ENCODE measurements at regions of chr9 and their contacts with region 1.

Region 1: DNA sequence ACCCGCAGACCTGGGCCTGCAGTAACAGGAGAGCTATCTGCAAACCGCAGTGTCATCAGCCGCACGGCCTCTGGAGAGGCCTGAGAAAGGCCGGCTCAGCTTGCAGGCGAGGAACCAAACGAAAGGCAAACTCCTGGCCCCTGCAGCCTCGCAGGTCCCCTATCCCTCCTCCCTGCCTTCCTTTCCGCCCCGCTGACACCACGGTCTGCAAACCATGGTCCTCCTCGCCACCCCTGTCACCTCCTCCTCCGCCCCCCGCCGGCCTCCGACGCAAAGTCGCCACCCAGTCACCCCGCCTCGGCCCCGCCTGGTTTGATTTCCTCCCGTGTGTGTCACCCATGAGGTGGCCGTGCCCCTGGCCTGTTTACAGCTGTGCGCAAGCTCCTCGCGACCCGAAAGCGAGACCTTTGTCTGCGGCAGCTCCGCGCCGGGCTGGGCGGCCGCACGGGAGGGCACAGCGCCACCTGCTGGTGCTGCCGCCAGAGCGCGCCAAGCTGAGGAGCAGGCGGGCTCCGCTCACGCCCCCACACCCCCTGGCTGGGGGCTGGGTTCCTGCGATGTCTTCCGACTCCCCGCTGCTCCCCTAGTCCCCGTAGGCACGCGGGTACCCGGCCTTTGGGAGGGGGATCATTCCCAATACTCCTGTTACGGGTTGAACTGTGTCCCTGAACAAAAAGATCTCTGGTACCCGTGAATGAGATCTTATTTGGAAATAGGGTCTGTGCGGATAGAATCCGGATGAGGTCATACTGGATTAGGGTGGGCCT is 19.4 kb downstream of the GBGT1 start:
- DNase-seq: peak; percentile 97
- ATAC-seq: peak; percentile 75
- H3K4me3 Mint-ChIP-seq: peak overlapping the region; percentile 51
- H3K27ac Mint-ChIP-seq: peak overlapping the region; percentile 76
- H3K4me1 Mint-ChIP-seq: peaks cover 63% of the 10 kb centered on the region
- H3K27me3 Mint-ChIP-seq: no peaks in the 10 kb centered on the region
- CTCF ChIP-seq: peak; percentile 98

Region 2: DNA sequence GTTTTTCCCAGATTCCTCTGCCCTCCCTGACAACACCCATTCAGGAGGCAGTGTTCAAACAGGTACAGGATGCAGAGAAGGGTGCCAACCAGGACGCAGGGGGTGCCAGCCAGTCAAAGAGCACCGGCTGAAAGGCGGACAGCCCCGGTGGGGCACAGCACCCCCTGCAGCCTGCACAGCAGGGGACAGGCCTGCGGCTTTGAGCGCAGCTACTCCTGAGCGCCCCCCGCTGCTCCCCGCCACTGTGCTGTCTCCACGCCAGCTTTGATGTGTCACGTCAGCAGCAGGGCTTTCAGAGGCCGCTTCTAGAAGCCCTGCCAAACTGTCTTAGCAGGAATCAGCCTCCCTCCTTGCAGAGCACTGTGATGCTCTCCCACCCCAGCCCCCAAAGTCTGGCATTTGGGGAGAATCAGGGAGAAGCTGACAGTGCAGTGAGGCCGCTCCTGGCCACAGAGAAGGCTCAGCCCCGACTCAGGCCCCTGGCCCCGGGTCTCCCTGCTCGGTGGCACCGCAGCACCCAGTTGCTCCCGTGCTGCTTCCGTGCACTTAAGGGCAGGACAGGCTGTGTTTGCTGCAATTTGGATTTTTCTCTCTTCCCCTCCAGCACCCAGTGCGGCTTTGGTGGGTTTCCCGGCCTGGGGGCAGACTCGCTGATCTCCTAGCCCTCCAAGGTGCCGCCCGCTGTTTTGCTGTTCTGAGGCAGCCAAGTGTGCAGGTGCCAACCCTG is 286.5 kb before region 1 on chr9:
- CTCF ChIA-PET with region 1: no interaction called
- POLR2A ChIA-PET with region 1: no interaction called
- intact Hi-C with region 1: no loop called
- DNase-seq: no peak
- ATAC-seq: no peak
- H3K4me3 Mint-ChIP-seq: no peak overlapping the region
- H3K27ac Mint-ChIP-seq: no peak overlapping the region
- H3K4me1 Mint-ChIP-seq: peaks cover 12% of the 10 kb centered on the region
- H3K27me3 Mint-ChIP-seq: peaks cover 2% of the 10 kb centered on the region
- CTCF ChIP-seq: no peak

Region 3: DNA sequence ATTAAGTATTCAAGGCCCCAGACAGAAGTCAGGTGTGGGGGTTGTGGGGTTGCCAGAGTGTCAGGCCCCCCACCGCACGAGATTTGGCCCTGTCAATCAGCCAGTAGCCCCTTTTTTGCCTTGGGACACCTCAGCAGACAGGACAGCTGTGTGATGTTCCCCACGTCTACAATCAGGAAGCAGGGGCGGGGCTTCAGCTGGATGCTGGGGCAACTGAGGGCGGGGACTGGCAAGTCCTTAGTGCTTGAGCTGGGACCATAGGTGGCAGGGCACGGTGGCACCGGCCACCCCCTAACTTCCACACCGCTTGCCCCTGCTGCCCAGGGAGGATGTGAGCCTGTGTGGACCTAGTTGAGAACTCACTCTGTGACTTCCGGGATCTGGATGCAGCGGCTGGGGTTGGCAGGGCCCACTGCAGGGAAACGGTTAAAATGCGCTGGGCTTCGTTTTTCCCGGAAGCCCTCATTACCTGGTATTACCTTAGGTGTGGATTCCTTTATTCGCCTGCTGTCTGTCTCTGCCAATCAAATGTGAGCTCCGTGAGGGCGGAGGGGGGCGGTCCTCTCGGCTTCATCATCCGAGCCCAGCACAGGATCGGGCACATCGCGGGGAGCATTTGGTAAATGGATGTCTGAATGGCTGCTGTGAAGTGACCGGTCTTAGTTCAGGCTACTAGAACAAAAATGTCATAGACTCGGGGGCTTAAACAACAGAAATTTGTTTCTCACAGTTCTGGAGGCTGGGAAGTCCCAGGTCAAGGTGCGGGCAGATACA is 121.0 kb before region 1 on chr9:
- CTCF ChIA-PET with region 1: interaction called, 22 read pairs
- POLR2A ChIA-PET with region 1: interaction called, 4 read pairs
- intact Hi-C with region 1: no loop called
- DNase-seq: peak; percentile 90
- ATAC-seq: peak; percentile 74
- H3K4me3 Mint-ChIP-seq: peak overlapping the region; percentile 70
- H3K27ac Mint-ChIP-seq: peak overlapping the region; percentile 77
- H3K4me1 Mint-ChIP-seq: peaks cover 23% of the 10 kb centered on the region
- H3K27me3 Mint-ChIP-seq: peaks cover 3% of the 10 kb centered on the region
- CTCF ChIP-seq: no peak

Region 4: GRCh38 chr9:133041958-133042357 is 102.4 kb before region 1 on chr9:
- CTCF ChIA-PET with region 1: interaction called, 14 read pairs
- POLR2A ChIA-PET with region 1: no interaction called
- intact Hi-C with region 1: loop called (anchors 2 kb)
- DNase-seq: no peak
- ATAC-seq: no peak
- H3K4me3 Mint-ChIP-seq: no peak overlapping the region
- H3K27ac Mint-ChIP-seq: no peak overlapping the region
- H3K4me1 Mint-ChIP-seq: peaks cover 11% of the 10 kb centered on the region
- H3K27me3 Mint-ChIP-seq: no peaks in the 10 kb centered on the region
- CTCF ChIP-seq: no peak

Region 5: GRCh38 chr9:133060417-133060841 is 83.9 kb before region 1 on chr9:
- CTCF ChIA-PET with region 1: interaction called, 19 read pairs
- POLR2A ChIA-PET with region 1: no interaction called
- intact Hi-C with region 1: no loop called
- DNase-seq: peak; percentile 27
- ATAC-seq: peak; percentile 46
- H3K4me3 Mint-ChIP-seq: no peak overlapping the region
- H3K27ac Mint-ChIP-seq: peak overlapping the region; percentile 80
- H3K4me1 Mint-ChIP-seq: peaks cover 55% of the 10 kb centered on the region
- H3K27me3 Mint-ChIP-seq: no peaks in the 10 kb centered on the region
- CTCF ChIP-seq: peak; percentile 31

Region 6: DNA sequence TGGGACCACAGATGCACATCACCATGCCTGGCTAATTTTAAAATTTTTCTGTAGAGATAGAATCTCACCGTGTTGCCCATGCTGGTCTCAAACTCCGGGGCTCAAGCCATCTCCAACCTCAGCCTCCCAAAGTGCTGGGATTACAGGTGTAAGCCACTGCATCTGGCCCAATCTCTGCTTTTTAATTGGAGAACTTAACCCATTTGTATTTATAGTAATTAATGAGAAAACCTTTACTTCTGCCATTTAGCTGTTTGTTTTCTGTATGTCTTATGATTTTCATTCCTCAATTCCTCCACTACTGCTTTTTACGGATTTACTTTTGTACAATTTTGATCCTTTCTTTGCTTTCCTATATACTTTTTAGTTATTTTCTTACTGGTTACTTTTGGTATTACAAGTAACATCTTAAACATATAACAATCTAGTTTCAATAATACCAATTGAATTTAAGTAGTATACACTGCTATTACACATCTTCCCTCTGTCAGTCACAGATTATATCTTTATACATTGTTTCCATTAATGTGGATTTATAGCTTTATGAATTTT is 49.4 kb before region 1 on chr9:
- CTCF ChIA-PET with region 1: interaction called, 21 read pairs
- POLR2A ChIA-PET with region 1: interaction called, 6 read pairs
- intact Hi-C with region 1: no loop called
- DNase-seq: no peak
- ATAC-seq: no peak
- H3K4me3 Mint-ChIP-seq: no peak overlapping the region
- H3K27ac Mint-ChIP-seq: no peak overlapping the region
- H3K4me1 Mint-ChIP-seq: no peaks in the 10 kb centered on the region
- H3K27me3 Mint-ChIP-seq: no peaks in the 10 kb centered on the region
- CTCF ChIP-seq: no peak

Measured in activated CD8-positive, alpha-beta T cell treated with anti-CD3 and anti-CD28 coated beads for 36 hours (primary cell).